ENCODE measurements at regions of chr1 and their contacts with region 1.

Region 1: GRCh38 chr1:28329395-28330153 is 734 bp downstream of the MED18 start:
- DNase-seq: peak; percentile 68
- ATAC-seq: peak; percentile 6
- H3K4me3 Mint-ChIP-seq: peak overlapping the region; percentile 97
- H3K27ac Mint-ChIP-seq: peak overlapping the region; percentile 96
- H3K4me1 Mint-ChIP-seq: peaks cover 32% of the 10 kb centered on the region
- H3K27me3 Mint-ChIP-seq: no peaks in the 10 kb centered on the region

Region 2: GRCh38 chr1:28172713-28173150 is 156.8 kb before region 1 on chr1:
- POLR2A ChIA-PET with region 1: no interaction called
- DNase-seq: peak; percentile 53
- ATAC-seq: peak; percentile 46
- H3K4me3 Mint-ChIP-seq: peak overlapping the region; percentile 76
- H3K27ac Mint-ChIP-seq: peak overlapping the region; percentile 68
- H3K4me1 Mint-ChIP-seq: peaks cover 53% of the 10 kb centered on the region
- H3K27me3 Mint-ChIP-seq: peaks cover 33% of the 10 kb centered on the region

Region 3: DNA sequence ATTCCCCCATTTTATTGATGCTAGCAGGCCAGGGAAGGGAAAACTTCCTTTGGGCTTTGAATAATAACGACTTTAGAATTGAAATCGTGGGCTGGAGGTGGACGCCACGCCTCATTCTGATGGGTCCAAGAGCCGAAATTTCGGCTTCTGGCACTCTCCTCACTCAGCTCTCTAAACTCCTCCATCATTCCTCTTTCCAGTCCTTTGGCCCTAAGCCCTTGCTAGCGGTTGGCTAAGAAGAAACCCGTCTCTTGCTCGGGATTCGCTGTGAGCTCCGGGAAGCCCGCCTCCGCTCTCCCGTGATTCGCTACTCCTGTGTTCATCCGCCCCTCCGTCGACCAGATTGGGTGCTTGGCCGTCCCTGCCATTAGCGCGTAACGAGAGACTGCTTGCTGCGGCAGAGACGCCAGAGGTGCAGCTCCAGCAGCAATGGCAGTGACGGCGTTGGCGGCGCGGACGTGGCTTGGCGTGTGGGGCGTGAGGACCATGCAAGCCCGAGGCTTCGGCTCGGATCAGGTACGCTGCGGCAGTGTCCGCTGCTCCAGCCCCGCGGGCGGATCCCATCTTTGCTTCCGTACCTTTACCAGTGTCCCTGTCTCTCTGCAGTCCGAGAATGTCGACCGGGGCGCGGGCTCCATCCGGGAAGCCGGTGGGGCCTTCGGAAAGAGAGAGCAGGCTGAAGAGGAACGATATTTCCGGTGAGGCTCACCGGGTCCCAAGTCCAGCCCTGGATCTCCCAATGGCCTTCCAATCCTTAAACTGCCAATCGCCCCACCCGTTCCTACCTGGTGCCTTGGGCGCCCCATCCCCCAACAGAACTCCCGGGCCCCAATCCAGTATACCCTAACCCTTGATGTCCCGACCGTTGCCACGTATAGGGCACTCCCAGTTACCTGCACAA is 93.6 kb before region 1 on chr1 and contains the start of gene ATP5IF1:
- POLR2A ChIA-PET with region 1: interaction called, 12 read pairs
- DNase-seq: peak; percentile 88
- ATAC-seq: peak; percentile 98
- H3K4me3 Mint-ChIP-seq: no peak within 1 kb of the TSS
- H3K27ac Mint-ChIP-seq: no peak within 1 kb of the TSS
- H3K4me1 Mint-ChIP-seq: peaks cover 7% of the 10 kb centered on the region
- H3K27me3 Mint-ChIP-seq: no peaks in the 10 kb centered on the region
- total RNA-seq, gene ATP5IF1: 209 to 222 TPM

Region 4: DNA sequence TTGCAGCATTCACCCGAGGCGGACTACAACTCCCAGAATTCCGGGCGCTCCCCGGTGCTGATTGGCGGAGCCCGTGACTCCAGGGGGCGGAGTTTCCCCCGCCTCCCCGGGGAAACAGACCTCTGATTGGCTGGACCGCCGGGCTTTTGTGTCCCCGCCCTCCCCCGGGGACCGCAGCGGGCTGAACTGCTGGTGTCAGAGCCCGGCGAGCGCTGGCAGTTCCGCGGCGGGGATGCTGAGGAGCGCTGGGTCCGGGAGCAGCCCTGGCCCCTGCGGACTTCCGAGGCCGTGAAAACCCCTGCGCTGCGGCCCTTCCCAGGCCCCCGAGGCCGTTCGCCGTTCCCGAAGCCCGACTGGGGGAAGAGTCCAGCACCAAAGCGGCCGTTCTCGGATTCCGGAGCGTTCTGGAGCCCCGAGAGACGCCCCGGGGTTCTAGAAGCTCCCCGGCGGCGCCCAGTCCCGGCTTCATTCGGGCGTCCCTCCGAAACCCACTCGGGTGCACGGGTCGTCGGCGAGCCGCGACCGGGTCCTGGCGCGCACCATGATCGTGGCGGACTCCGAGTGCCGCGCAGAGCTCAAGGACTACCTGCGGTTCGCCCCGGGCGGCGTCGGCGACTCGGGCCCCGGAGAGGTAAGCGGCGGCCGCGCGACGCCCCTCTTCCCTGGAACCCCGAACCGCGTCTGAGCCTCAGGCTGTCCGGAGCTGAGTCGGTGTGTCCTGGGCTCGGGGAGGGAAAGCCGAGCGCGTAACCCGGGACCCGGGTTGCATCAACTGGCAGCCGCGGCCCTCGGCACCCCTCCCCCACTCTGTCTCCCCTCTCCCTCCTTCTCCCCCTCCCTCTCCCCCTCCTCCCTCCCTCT is 70.0 kb before region 1 on chr1 and contains the start of gene SESN2:
- POLR2A ChIA-PET with region 1: interaction called, 34 read pairs
- DNase-seq: peak; percentile 99
- ATAC-seq: peak; percentile 88
- H3K4me3 Mint-ChIP-seq: peak within 1 kb of the TSS; percentile 79
- H3K27ac Mint-ChIP-seq: peak within 1 kb of the TSS; percentile 98
- H3K4me1 Mint-ChIP-seq: peaks cover 32% of the 10 kb centered on the region
- H3K27me3 Mint-ChIP-seq: no peaks in the 10 kb centered on the region
- total RNA-seq, gene SESN2: 14.6 to 16.0 TPM

Region 5: DNA sequence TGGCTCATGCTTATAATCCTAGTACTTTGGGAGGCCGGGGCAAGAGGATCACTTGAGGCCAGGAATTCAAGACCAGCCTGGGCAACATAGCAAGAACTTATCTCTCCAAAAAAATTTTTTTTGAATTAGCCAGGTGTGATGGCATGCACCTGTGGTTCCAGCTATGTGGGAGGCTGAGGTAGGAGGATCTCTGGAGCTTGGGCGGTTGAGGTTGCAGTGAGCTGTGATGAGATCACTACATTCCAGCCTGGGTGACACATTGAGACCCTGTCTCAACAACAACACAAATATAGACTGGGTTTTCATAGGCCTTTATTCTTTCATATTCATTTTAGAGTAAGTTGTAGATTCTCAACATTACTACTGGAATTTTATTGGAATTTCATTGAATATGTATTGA is 12.0 kb after region 1 on chr1:
- POLR2A ChIA-PET with region 1: interaction called, 31 read pairs
- DNase-seq: no peak
- ATAC-seq: no peak
- H3K4me3 Mint-ChIP-seq: no peak overlapping the region
- H3K27ac Mint-ChIP-seq: no peak overlapping the region
- H3K4me1 Mint-ChIP-seq: peaks cover 10% of the 10 kb centered on the region
- H3K27me3 Mint-ChIP-seq: no peaks in the 10 kb centered on the region

Region 6: DNA sequence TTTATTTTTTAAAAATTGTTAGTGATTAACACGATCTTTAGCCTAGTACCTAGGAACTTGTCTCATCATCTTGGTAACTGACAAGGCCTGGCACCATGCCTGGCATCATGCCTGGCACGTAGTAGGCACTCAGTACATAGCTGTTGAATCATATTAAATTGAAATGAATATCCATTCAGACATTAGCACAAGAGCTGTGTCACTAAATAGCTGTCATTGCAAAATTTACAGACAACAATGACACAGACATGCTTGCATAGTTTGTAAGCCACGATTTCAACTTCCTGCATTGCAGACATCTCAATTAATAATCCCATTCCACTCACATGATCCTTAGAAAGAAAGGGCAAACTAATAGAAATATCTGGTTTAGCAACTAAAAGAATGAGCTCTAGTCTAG is 24.5 kb after region 1 on chr1:
- POLR2A ChIA-PET with region 1: no interaction called
- DNase-seq: no peak
- ATAC-seq: no peak
- H3K4me3 Mint-ChIP-seq: no peak overlapping the region
- H3K27ac Mint-ChIP-seq: no peak overlapping the region
- H3K4me1 Mint-ChIP-seq: peaks cover 4% of the 10 kb centered on the region
- H3K27me3 Mint-ChIP-seq: no peaks in the 10 kb centered on the region

Measured in activated naive CD8-positive, alpha-beta T cell treated with anti-CD3 and anti-CD28 coated beads, Interleukin-2, amount 10 ng/mL, durations not matched to agents 7 days and 5 days (primary cell).